Heart right ventricle (tissue), 16 donors: ENCODE measurements at regions of chr1 and their contacts with region 1.

Region 1: DNA sequence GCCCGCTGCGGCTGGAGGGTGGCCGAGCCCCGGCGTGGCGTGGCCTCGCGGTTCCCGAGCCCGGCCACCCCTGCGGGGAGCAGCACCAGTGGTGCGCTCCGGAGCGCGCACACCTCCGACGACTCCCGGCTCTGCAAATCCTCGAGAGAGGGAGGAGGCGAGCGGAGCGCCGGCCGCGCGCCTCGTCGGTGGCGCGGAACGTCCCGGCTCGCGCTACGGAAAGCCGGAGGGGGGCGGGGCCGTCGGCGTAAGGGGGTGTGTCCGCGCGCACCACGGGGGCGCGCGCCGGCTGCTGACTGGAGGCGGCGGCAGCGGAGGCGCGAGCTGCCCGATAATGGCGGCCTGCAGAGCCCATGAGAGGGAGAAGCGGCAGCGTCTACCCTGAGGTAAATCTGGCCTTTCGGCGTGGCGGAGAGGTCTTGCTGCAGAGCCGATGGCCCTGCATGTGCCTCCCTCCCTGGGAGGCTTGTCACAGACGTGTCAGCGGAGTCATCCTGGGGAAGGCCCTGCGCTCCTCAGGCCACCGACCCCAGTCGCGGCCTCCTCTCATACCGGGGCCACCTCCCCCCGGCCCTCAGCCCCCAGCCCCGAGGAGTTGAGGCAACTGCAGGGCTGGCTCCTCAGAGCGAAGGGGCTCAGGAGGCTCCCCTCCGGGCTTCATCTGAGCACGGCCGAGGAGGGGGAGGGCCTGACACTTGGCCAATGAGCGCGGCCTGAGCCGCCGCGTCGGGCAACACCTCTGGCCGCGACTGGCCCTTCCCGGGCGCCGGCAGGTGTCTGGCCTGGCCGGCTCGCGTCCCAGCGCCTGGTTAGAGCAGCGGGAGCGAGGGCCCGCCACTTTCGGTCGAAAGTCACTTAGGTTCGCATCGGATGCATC is at the start of gene PDIK1L:
- DNase-seq: peak; percentile 92 to 95
- ATAC-seq: peak; percentile 92 to 96 (median 95)
- H3K4me3 ChIP-seq: peak within 1 kb of the TSS; percentile 79 to 100 (median 97)
- H3K27ac ChIP-seq: peak within 1 kb of the TSS; percentile 80 to 100 (median 97)
- H3K4me1 ChIP-seq: peaks cover 6 to 44% (median 34%) of the 10 kb centered on the region in 9 donors
- H3K27me3 ChIP-seq: no peaks in the 10 kb centered on the region
- CTCF ChIP-seq: peak in 1 of 9 donors; percentile 8
- total RNA-seq, gene PDIK1L: 3.8 to 8.3 (median 5.7) TPM

Region 2: GRCh38 chr1:26145041-26145959 is 33.5 kb after region 1 on chr1:
- intact Hi-C with region 1: loop called in 4 of 10 experiments (anchors 1 to 5 kb)
- DNase-seq: peak; percentile 60 to 80
- ATAC-seq: peak; percentile 83 to 96 (median 94)
- H3K4me3 ChIP-seq: no peak overlapping the region
- H3K27ac ChIP-seq: no peak overlapping the region
- H3K4me1 ChIP-seq: peaks cover 0 to 14% (median 4%) of the 10 kb centered on the region in 9 donors
- H3K27me3 ChIP-seq: no peaks in the 10 kb centered on the region
- CTCF ChIP-seq: peak; percentile 72 to 89 (median 82)

Region 3: GRCh38 chr1:26161415-26162219 is 49.8 kb after region 1 on chr1:
- intact Hi-C with region 1: loop called in 5 of 10 experiments (anchors 1 to 5 kb)
- DNase-seq: peak; percentile 60 to 79
- ATAC-seq: peak; percentile 19 to 65 (median 48)
- H3K4me3 ChIP-seq: peak overlapping the region; percentile 29 to 70 (median 60)
- H3K27ac ChIP-seq: peak overlapping the region; percentile 85 to 97 (median 93)
- H3K4me1 ChIP-seq: peaks cover 27 to 76% (median 58%) of the 10 kb centered on the region in 9 donors
- H3K27me3 ChIP-seq: peaks cover 0 to 66% (median 0%) of the 10 kb centered on the region in 7 donors
- CTCF ChIP-seq: peak in 5 of 9 donors; percentile 13 to 53 (median 41)

Region 4: GRCh38 chr1:26169669-26170471 is 58.1 kb after region 1 on chr1 and contains the start of gene ZNF593:
- intact Hi-C with region 1: loop called in 2 of 10 experiments (anchors 2 to 5 kb)
- DNase-seq: peak; percentile 92 to 94
- ATAC-seq: peak; percentile 96 to 98 (median 97)
- H3K4me3 ChIP-seq: peak within 1 kb of the TSS; percentile 63 to 100 (median 88)
- H3K27ac ChIP-seq: peak within 1 kb of the TSS in 9 of 10 donors; percentile 79 to 89 (median 82)
- H3K4me1 ChIP-seq: peaks cover 5 to 33% (median 16%) of the 10 kb centered on the region in 9 donors
- H3K27me3 ChIP-seq: no peaks in the 10 kb centered on the region
- CTCF ChIP-seq: peak; percentile 80 to 97 (median 91)
- total RNA-seq, gene ZNF593: 10.7 to 26.0 (median 18.3) TPM

Region 5: DNA sequence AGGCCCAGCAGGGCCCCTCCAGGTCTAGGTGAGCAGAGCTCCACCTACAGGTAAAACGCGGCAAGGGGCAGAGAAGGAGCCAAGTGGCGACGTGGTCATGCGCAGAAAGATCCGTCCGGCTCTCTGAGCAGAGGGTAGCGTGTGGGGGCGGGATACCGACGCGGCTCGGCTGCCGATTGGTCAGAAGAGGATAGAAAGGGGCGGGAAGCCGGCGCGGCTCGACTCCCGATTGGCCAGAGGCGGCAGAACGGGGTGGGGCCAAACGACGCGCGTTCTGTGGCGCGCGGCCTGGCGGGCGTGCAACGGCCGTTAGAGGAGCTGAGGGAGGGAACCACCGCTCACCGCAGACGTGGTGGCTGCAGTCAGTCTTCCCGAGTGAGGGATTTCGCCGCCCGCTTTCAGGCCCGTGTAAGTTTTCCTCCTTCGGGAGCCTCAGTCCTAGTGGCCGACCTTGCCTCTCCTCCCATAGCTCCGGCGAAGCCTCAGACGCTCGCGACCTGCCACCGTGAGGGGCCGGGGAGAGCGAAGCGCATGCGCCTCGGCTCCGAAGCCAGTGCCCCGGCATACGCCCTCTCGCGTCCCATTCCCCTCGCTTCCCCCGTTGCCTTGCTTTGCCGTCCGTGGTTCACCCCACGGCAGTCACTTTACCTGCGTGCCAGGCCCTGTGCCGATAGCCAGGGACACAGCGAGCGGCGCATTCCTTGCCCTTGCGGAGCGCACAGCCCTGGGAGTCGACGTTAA is 122.3 kb after region 1 on chr1 and contains the start of gene CEP85:
- intact Hi-C with region 1: loop called in 5 of 10 experiments (anchors 5 to 10 kb)
- DNase-seq: peak; percentile 97 to 99
- ATAC-seq: peak; percentile 99 to 100 (median 99)
- H3K4me3 ChIP-seq: peak within 1 kb of the TSS; percentile 62 to 93 (median 72)
- H3K27ac ChIP-seq: peak within 1 kb of the TSS; percentile 69 to 94 (median 89)
- H3K4me1 ChIP-seq: peaks cover 0 to 42% (median 14%) of the 10 kb centered on the region in 9 donors
- H3K27me3 ChIP-seq: no peaks in the 10 kb centered on the region
- CTCF ChIP-seq: peak; percentile 69 to 95 (median 85)
- total RNA-seq, gene CEP85: 29.9 to 74.5 (median 53.8) TPM

Region 6: DNA sequence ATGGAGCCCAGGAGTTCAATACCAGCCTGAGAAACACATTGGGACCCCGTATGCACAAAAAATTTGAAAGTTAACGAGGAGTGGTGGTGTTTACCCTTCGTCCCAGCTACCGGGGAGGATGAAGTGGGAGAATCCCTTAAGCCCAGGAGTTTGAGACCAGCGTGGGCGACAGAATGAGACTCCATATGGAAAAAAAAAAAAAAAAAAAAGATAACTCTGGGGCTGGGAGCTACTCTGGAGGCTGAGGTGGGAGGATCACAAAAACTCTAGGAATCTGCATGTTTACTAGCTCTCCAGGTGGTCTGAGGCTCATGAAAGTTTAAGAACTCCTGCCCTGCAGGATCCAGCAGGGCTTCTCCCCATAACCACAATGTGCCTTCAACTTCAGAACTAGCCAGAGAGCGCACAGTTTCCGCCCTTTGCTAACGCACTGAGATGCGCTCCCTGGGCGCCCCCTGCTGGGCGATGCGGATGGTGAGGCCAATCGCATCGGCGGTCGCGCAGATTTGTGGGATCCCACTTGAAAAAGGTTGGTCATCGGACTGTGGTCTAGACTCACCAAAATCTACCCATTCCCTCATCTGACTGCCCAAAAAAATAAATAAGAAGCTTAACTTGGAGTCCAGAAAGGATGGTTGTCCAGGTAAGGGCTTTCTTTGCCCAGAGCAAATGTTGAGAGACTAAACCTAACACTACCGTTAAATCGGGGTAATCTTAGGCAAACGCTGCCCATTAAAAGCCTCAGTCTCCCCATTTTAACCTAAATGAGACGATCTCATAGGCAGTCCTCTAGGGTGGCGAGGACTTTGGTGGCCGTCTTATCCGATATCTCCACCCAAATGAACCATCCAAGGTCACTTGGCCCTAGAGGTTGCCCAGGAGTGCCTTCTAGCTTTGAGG is 252.0 kb after region 1 on chr1:
- intact Hi-C with region 1: loop called in 1 of 10 experiments (anchors 5 kb)
- DNase-seq: peak; percentile 75 to 77
- ATAC-seq: peak in 5 of 8 donors; percentile 66 to 86 (median 81)
- H3K4me3 ChIP-seq: no peak overlapping the region
- H3K27ac ChIP-seq: no peak overlapping the region
- H3K4me1 ChIP-seq: peaks cover 0 to 21% (median 10%) of the 10 kb centered on the region in 9 donors
- H3K27me3 ChIP-seq: peaks cover 16 to 89% (median 57%) of the 10 kb centered on the region in 7 donors
- CTCF ChIP-seq: peak; percentile 72 to 96 (median 90)